SK-N-SH (cell line): ENCODE measurements at regions of chr6 and their contacts with region 1.

Region 1: GRCh38 chr6:131914967-131915751 is 36.0 kb downstream of the CCN2 start:
- DNase-seq: peak; percentile 33
- H3K4me3 ChIP-seq: no peak overlapping the region; a peak in 1 of 4 replicates
- H3K27ac ChIP-seq: no peak overlapping the region
- H3K4me1 ChIP-seq: no peaks in the 10 kb centered on the region
- H3K27me3 ChIP-seq: peaks cover 30% of the 10 kb centered on the region
- CTCF ChIP-seq: peak; percentile 94
- EP300 ChIP-seq: no peak
- RAD21 ChIP-seq: peak; percentile 80

Region 2: GRCh38 chr6:131379948-131380347 is 535.2 kb before region 1 on chr6:
- CTCF ChIA-PET with region 1: no interaction called
- POLR2A ChIA-PET with region 1: no interaction called
- DNase-seq: no peak
- H3K4me3 ChIP-seq: no peak overlapping the region
- H3K27ac ChIP-seq: peak overlapping the region in 1 of 2 experiments; percentile 45; a peak in 1 of 4 replicates
- H3K4me1 ChIP-seq: peaks cover 0 to 19% of the 10 kb centered on the region in 2 experiments; a peak in 1 of 4 replicates
- H3K27me3 ChIP-seq: peaks cover 8% of the 10 kb centered on the region; the same call in 1 of the 2 replicates
- CTCF ChIP-seq: no peak
- EP300 ChIP-seq: no peak; a peak in 1 of 4 replicates
- RAD21 ChIP-seq: no peak

Region 3: GRCh38 chr6:132218059-132218696 is 303.0 kb after region 1 on chr6:
- CTCF ChIA-PET with region 1: interaction called, 11 read pairs
- POLR2A ChIA-PET with region 1: no interaction called
- DNase-seq: peak; percentile 13
- H3K4me3 ChIP-seq: no peak overlapping the region
- H3K27ac ChIP-seq: peak overlapping the region in 1 of 2 experiments; percentile 35; a peak in 1 of 4 replicates
- H3K4me1 ChIP-seq: no peaks in the 10 kb centered on the region; a peak in 1 of 4 replicates
- H3K27me3 ChIP-seq: no peaks in the 10 kb centered on the region
- CTCF ChIP-seq: peak; percentile 56
- EP300 ChIP-seq: no peak
- RAD21 ChIP-seq: peak; percentile 52